Posterior vena cava (tissue), 2 donors: ENCODE measurements at regions of chr4 and their contacts with region 1.

Region 1: GRCh38 chr4:120771907-120772306 is 150.6 kb downstream of the PRDM5 start:
- DNase-seq: no peak

Region 2: GRCh38 chr4:119748853-119749252 is 1023.1 kb before region 1 on chr4:
- intact Hi-C with region 1: loop called in 1 of 2 experiments (anchors 5 kb)
- DNase-seq: no peak